Left lung (tissue), 14 donors: ENCODE measurements at regions of chr6 and their contacts with region 1.

Region 1: GRCh38 chr6:116096979-116097816 is 3.5 kb upstream of the NT5DC1 start:
- DNase-seq: no peak
- ATAC-seq: no peak
- H3K4me3 ChIP-seq: no peak overlapping the region
- H3K27ac ChIP-seq: no peak overlapping the region
- H3K4me1 ChIP-seq: peaks cover 10 to 27% of the 10 kb centered on the region in 2 donors
- H3K27me3 ChIP-seq: no peaks in the 10 kb centered on the region
- CTCF ChIP-seq: peak; percentile 9 to 60

Region 2: GRCh38 chr6:116010790-116011401 is 86.3 kb before region 1 on chr6:
- intact Hi-C with region 1: loop called in 1 of 2 experiments (anchors 5 kb)
- DNase-seq: peak; percentile 28 to 85 (median 65)
- ATAC-seq: peak; percentile 82
- H3K4me3 ChIP-seq: no peak overlapping the region
- H3K27ac ChIP-seq: peak overlapping the region in 1 of 2 donors; percentile 27
- H3K4me1 ChIP-seq: peaks cover 17 to 22% of the 10 kb centered on the region in 2 donors
- H3K27me3 ChIP-seq: no peaks in the 10 kb centered on the region
- CTCF ChIP-seq: peak; percentile 67 to 83

Region 3: GRCh38 chr6:116902629-116903028 is 805.4 kb after region 1 on chr6:
- intact Hi-C with region 1: no loop called
- DNase-seq: no peak
- ATAC-seq: no peak
- H3K4me3 ChIP-seq: no peak overlapping the region
- H3K27ac ChIP-seq: no peak overlapping the region
- H3K4me1 ChIP-seq: no peaks in the 10 kb centered on the region
- H3K27me3 ChIP-seq: no peaks in the 10 kb centered on the region
- CTCF ChIP-seq: no peak